ENCODE measurements at regions of chr5 and their contacts with region 1.

Region 1: GRCh38 chr5:156824800-156825199 is 25.3 kb upstream of the PPP1R2B start:
- DNase-seq: peak in 1 of 2 donors; percentile 80
- H3K4me3 ChIP-seq: no peak overlapping the region
- H3K27ac ChIP-seq: no peak overlapping the region
- H3K4me1 ChIP-seq: no peaks in the 10 kb centered on the region
- H3K27me3 ChIP-seq: no peaks in the 10 kb centered on the region
- CTCF ChIP-seq: peak in 4 of 7 experiments; percentile 5 to 43 (median 16)
- EP300 ChIP-seq: no peak
- POLR2A ChIP-seq: no peak

Region 2: GRCh38 chr5:155943516-155944407 is 881.0 kb before region 1 on chr5:
- intact Hi-C with region 1: loop called (anchors 10 kb)
- DNase-seq: peak in 1 of 2 donors; percentile 85
- H3K4me3 ChIP-seq: no peak overlapping the region
- H3K27ac ChIP-seq: no peak overlapping the region
- H3K4me1 ChIP-seq: no peaks in the 10 kb centered on the region
- H3K27me3 ChIP-seq: no peaks in the 10 kb centered on the region
- CTCF ChIP-seq: peak in 4 of 7 experiments; percentile 40 to 61 (median 50)
- EP300 ChIP-seq: no peak
- POLR2A ChIP-seq: no peak